HEK293T (cell line): ENCODE measurements at regions of chr2 and their contacts with region 1.

Region 1: DNA sequence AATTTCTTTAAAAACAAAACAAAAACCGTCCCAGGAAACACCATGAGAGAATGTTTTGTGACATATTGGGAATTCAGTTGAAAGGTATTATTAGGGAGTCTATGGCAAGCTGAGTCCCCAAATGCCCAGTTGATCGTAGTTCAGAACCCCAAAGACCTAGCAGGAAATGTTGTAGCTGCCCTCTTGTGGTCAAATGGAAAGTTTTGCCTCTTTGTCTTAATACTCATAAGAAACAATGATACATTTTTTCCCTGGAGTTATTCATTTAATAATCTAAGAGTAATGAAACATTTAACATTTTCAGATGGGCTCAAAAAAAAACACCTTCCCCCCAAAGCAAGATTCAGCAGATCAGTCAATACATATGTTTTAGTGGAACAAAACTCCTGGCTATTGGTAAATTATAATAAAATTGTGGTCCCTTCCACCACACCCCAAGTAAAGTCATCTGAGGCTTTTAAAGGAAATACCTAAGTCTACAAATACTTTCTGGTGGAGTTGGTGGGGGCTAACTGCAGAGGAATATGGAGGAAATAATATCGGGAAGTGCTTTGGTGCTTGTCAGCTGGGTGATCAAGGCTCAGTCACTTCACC is 37.8 kb upstream of the EFEMP1 start:
- DNase-seq: peak; percentile 15

Region 2: DNA sequence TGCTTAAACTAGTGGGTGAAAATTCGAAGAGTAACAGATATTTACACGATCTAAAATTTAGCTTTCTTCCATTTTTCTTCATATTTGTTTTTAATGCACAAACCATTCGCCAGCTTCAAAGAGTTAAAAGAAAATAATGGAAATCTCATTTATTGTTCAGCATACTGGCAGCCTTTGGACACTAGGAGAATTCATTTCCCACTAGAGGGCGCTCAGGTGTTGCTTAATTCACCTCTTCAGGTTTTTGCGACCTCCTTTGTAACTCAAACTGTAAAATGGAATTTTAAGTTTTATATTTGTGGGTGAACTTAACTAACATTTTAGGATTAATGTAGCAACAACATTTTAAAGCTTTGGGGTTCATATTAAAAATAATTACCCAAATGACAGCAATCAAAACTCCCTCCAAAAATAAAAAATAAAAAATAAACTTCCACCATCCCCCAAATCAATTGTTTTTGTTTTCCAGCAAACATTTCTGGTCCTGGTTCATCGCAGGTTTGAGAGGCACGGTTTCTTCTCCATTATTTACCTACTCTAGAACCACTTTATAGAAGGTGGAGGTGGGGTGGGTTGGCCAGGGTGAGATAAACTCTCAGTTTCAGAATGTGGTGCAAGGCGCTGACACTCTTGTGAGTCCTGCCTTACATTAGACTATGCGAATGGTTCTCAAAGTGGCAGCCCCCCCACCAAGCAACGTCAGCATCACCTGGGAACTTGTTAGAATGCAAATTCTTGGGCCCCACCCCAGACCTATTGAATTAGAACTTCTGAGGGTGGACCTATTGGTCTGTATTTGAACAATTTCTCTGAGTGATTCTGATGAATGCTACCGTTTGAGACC is 243.0 kb before region 1 on chr2:
- CTCF ChIA-PET with region 1: interaction called, 11 read pairs
- POLR2A ChIA-PET with region 1: no interaction called
- DNase-seq: peak; percentile 58

Region 3: GRCh38 chr2:55771612-55772011 is 189.8 kb before region 1 on chr2:
- CTCF ChIA-PET with region 1: interaction called, 15 read pairs
- POLR2A ChIA-PET with region 1: no interaction called
- DNase-seq: no peak